A549 (cell line): ENCODE measurements at regions of chr15 and their contacts with region 1.

Region 1: GRCh38 chr15:83248151-83249029 is 36.1 kb downstream of the BNC1 start:
- DNase-seq: peak; percentile 18 to 71
- ATAC-seq: peak; percentile 79 to 93
- H3K4me3 ChIP-seq: no peak overlapping the region
- H3K27ac ChIP-seq: peak overlapping the region in 1 of 2 experiments; percentile 10; a peak in 1 of 6 replicates
- H3K4me1 ChIP-seq: no peaks in the 10 kb centered on the region
- CTCF ChIP-seq: peak; percentile 98
- EP300 ChIP-seq: no peak
- POLR2A ChIP-seq: no peak
- RAD21 ChIP-seq: peak; percentile 97 to 98

Region 2: GRCh38 chr15:82966671-82967071 is 281.7 kb before region 1 on chr15:
- CTCF ChIA-PET with region 1: no interaction called
- POLR2A ChIA-PET with region 1: no interaction called
- DNase-seq: no peak
- ATAC-seq: no peak
- H3K4me3 ChIP-seq: no peak overlapping the region
- H3K27ac ChIP-seq: no peak overlapping the region
- H3K4me1 ChIP-seq: no peaks in the 10 kb centered on the region
- CTCF ChIP-seq: no peak
- EP300 ChIP-seq: no peak
- POLR2A ChIP-seq: no peak
- RAD21 ChIP-seq: no peak

Region 3: GRCh38 chr15:83262594-83263315 is 14.4 kb after region 1 on chr15:
- CTCF ChIA-PET with region 1: interaction called, 21 read pairs
- POLR2A ChIA-PET with region 1: no interaction called
- DNase-seq: no peak
- ATAC-seq: no peak
- H3K4me3 ChIP-seq: no peak overlapping the region
- H3K27ac ChIP-seq: no peak overlapping the region
- H3K4me1 ChIP-seq: no peaks in the 10 kb centered on the region
- CTCF ChIP-seq: no peak
- EP300 ChIP-seq: no peak
- POLR2A ChIP-seq: no peak
- RAD21 ChIP-seq: no peak

Region 4: DNA sequence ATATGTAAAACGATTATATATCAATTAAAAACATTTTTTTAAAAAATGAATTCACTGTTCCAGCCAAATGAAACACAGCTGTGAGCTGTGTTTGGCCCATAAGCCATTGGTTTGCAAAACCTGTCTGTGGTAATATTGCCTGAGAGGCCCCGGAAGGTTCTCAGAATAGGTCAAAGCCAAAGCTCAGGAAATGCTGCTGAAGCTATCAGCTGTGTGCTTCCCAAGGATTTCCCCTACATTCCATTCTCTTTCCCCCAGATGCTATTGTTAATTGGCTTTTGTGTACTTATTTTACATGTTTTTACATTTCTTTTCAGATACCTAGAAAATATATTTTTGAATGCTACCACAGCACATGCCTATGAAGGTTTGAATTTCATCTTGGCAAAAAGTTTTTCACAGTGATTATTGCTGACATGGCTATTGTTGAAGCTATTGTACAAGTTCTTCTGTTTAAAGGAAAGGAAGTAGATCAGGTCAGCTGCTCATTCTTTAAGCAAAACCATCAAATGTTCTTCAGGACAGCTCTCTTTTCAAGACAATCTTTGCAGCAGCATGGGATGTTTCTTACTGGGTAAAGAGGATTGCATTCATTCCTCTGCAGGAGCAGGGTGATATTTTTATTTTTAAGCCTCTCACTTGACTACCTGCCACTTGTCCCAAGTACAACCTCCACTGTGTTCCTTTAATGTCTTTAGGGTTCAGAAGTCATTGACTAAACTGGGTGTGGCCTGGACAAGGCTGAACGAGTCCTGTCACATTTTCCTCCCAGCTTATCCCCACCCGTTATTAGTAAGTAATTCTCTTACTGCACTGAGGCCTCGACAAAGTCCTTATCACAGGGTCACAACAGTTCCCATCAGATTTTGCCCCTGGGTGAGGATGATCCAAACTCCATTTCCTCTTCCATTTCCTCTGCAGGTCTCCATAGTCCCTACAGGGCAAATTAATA is 62.4 kb after region 1 on chr15:
- CTCF ChIA-PET with region 1: interaction called, 11 read pairs
- POLR2A ChIA-PET with region 1: no interaction called
- DNase-seq: no peak
- ATAC-seq: no peak
- H3K4me3 ChIP-seq: no peak overlapping the region
- H3K27ac ChIP-seq: no peak overlapping the region
- H3K4me1 ChIP-seq: peaks cover 8% of the 10 kb centered on the region
- CTCF ChIP-seq: no peak
- EP300 ChIP-seq: no peak
- POLR2A ChIP-seq: no peak
- RAD21 ChIP-seq: no peak

Region 5: GRCh38 chr15:83380682-83381081 is 132.3 kb after region 1 on chr15:
- CTCF ChIA-PET with region 1: interaction called, 83 read pairs
- POLR2A ChIA-PET with region 1: no interaction called
- DNase-seq: peak; percentile 62 to 72
- ATAC-seq: peak; percentile 86 to 90
- H3K4me3 ChIP-seq: no peak overlapping the region
- H3K27ac ChIP-seq: peak overlapping the region; percentile 59 to 64; a peak in 5 of 6 replicates
- H3K4me1 ChIP-seq: peaks cover 20% of the 10 kb centered on the region
- CTCF ChIP-seq: peak; percentile 66
- EP300 ChIP-seq: no peak
- POLR2A ChIP-seq: no peak
- RAD21 ChIP-seq: peak; percentile 76 to 90

Region 6: GRCh38 chr15:83446904-83447709 is 198.7 kb after region 1 on chr15 and contains the start of gene SH3GL3:
- CTCF ChIA-PET with region 1: interaction called, 65 read pairs
- POLR2A ChIA-PET with region 1: no interaction called
- DNase-seq: peak; percentile 63 to 73
- ATAC-seq: peak; percentile 87 to 93
- H3K4me3 ChIP-seq: peak within 1 kb of the TSS; percentile 64
- H3K27ac ChIP-seq: peak within 1 kb of the TSS in 1 of 2 experiments; percentile 56; a peak in 3 of 6 replicates
- H3K4me1 ChIP-seq: 0 out of 3 replicates have a peak, but pooled peaks cover 4% of the 10 kb centered on the region
- CTCF ChIP-seq: peak; percentile 55
- EP300 ChIP-seq: no peak
- POLR2A ChIP-seq: no peak
- RAD21 ChIP-seq: peak; percentile 50 to 56; a peak in 4 of 5 replicates
- polyA plus RNA-seq, gene SH3GL3: 0.19 TPM in 1 of 2 replicates, not detected in the other

Region 7: DNA sequence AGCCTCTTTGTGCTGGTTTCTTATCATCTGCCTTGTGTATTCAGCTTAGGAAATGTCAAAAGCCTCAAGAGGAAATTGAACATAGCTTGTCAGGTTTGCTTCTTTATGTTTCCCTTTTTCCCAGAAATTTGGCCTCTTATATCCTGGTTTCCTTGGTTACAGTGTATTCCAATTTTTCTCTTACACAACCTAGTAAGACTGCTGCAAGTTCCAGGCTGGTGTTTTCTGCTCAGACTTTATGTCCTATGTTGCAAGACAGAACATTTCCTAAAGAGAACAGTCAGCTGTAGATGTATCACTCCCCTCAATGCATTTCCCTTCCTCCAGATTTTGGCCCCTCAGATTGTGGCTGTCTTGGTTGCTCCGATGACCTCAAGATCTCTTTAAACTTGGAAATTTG is 301.2 kb after region 1 on chr15:
- CTCF ChIA-PET with region 1: interaction called, 219 read pairs
- POLR2A ChIA-PET with region 1: no interaction called
- DNase-seq: no peak
- ATAC-seq: no peak
- H3K4me3 ChIP-seq: no peak overlapping the region
- H3K27ac ChIP-seq: no peak overlapping the region
- H3K4me1 ChIP-seq: no peaks in the 10 kb centered on the region
- CTCF ChIP-seq: no peak
- EP300 ChIP-seq: no peak
- POLR2A ChIP-seq: no peak
- RAD21 ChIP-seq: no peak